ENCODE measurements at regions of chr1 and their contacts with region 1.

Region 1: DNA sequence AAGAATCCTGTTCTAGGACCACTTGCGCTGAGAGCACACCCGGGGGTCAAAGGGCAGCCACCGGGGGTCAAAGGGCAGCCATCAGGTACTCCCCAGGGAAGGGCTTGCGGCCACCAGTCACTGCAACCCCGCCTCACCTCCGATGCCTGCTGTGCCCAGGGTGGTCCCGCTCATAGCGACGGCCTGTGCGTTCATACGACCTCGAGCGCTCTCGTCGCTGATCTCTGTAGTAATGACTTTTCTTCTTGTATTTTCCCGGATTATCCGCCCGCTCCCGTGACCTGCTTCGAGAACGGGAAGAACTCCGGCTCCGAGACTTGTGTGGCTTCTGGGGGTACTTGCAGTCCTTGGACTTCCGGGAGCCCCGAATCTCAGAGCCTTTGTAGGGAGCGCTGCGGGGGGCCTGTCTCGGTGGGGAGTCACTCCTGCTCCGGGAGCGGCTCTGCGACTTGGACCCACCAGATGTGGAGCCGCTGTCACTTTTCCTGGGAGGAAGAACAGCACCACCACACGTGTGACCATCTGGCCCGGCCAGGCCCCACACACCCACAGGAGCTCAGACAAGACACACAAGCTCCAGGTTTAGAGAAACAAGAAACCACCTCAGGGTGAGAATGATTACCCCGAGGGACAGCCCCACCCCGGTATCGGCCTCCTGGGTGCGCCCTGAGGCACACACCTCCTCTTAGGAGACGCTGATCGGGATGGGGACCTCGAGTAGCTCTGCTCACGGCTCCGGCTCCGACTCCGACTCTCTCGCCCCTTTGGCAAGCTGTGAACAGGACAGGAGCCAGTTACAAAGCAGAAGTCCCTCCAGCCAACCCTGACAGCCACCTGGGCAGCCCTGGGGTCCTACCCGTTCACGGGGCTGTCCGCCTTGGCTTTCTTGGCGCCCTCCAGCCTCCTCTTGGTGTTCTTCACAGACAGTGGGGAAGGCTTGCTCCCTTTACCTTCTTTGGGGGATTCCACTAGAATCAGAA is 11.7 kb downstream of the CCNL2 start:
- DNase-seq: no peak
- ATAC-seq: no peak
- H3K4me3 ChIP-seq: no peak overlapping the region
- H3K4me3 Mint-ChIP-seq: no peak overlapping the region
- H3K27ac ChIP-seq: no peak overlapping the region
- H3K27ac Mint-ChIP-seq: no peak overlapping the region
- H3K4me1 ChIP-seq: no peaks in the 10 kb centered on the region
- H3K4me1 Mint-ChIP-seq: peaks cover 2% of the 10 kb centered on the region
- H3K27me3 ChIP-seq: no peaks in the 10 kb centered on the region
- H3K27me3 Mint-ChIP-seq: no peaks in the 10 kb centered on the region
- CTCF ChIP-seq: no peak

Region 2: DNA sequence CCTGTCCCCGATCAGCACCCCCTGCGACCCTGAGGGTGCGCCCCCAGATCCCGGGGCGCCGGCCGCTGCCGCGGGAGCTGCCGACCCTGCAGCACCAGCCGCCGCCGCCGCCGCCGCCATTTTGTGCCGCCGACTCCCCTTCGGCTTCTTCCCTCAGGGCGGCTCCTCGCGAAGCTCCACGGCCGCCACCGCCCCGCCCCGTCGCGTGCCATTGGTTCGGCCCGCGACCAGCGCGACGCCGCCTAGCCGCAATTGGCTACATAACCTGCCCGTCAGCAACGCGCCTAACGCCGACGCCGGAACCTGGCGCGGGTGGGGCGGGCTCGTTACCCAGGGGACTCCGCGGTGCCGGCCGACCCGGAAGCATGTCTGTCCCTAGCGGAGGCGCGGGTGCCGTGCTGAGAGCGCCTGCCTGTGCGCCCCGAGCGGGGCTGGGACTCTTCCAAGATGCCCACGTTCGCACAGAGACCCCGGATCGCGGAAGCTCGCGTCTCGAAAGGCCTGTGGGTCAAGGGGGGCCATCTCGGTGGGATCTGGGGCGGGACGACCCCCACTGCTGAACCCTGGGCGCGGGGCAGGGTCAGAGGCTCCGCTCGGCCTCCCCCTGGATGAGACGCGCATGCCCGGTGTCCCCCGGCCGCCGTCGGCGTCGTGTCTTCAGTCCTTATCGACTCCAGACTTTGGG is 11.9 kb after region 1 on chr1 and contains the start of gene CCNL2:
- CTCF ChIA-PET with region 1: interaction called, 5 read pairs
- POLR2A ChIA-PET with region 1: interaction called, 21 read pairs
- intact Hi-C with region 1: loop called in 1 of 2 experiments (anchors 1 kb)
- DNase-seq: peak; percentile 98 to 100 (median 99)
- ATAC-seq: peak; percentile 95
- H3K4me3 ChIP-seq: peak within 1 kb of the TSS; percentile 99
- H3K4me3 Mint-ChIP-seq: peak within 1 kb of the TSS; percentile 92
- H3K27ac ChIP-seq: peak within 1 kb of the TSS; percentile 81 to 89
- H3K27ac Mint-ChIP-seq: peak within 1 kb of the TSS; percentile 86
- H3K4me1 ChIP-seq: peaks cover 47% of the 10 kb centered on the region
- H3K4me1 Mint-ChIP-seq: peaks cover 53% of the 10 kb centered on the region
- H3K27me3 ChIP-seq: no peaks in the 10 kb centered on the region
- H3K27me3 Mint-ChIP-seq: no peaks in the 10 kb centered on the region
- CTCF ChIP-seq: peak; percentile 45
- total RNA-seq, gene CCNL2: 274 to 281 TPM

Region 3: GRCh38 chr1:1435106-1435903 is 47.9 kb after region 1 on chr1 and contains the start of gene VWA1:
- CTCF ChIA-PET with region 1: no interaction called
- POLR2A ChIA-PET with region 1: no interaction called
- intact Hi-C with region 1: no loop called
- DNase-seq: peak in 13 of 14 experiments; percentile 26 to 74 (median 48)
- ATAC-seq: peak; percentile 78
- H3K4me3 ChIP-seq: no peak within 1 kb of the TSS
- H3K4me3 Mint-ChIP-seq: peak within 1 kb of the TSS; percentile 20
- H3K27ac ChIP-seq: no peak within 1 kb of the TSS
- H3K27ac Mint-ChIP-seq: no peak within 1 kb of the TSS
- H3K4me1 ChIP-seq: peaks cover 24% of the 10 kb centered on the region
- H3K4me1 Mint-ChIP-seq: no peaks in the 10 kb centered on the region
- H3K27me3 ChIP-seq: peaks cover 56 to 65% of the 10 kb centered on the region in 2 experiments
- H3K27me3 Mint-ChIP-seq: peaks cover 11% of the 10 kb centered on the region
- CTCF ChIP-seq: no peak
- total RNA-seq, gene VWA1: not detected